ENCODE measurements at regions of chr3 and their contacts with region 1.

Region 1: GRCh38 chr3:122251428-122251827 is 68.0 kb downstream of the CASR start:
- DNase-seq: no peak
- ATAC-seq: no peak
- H3K4me3 ChIP-seq: no peak overlapping the region
- H3K4me1 ChIP-seq: no peaks in the 10 kb centered on the region
- CTCF ChIP-seq: no peak

Region 2: DNA sequence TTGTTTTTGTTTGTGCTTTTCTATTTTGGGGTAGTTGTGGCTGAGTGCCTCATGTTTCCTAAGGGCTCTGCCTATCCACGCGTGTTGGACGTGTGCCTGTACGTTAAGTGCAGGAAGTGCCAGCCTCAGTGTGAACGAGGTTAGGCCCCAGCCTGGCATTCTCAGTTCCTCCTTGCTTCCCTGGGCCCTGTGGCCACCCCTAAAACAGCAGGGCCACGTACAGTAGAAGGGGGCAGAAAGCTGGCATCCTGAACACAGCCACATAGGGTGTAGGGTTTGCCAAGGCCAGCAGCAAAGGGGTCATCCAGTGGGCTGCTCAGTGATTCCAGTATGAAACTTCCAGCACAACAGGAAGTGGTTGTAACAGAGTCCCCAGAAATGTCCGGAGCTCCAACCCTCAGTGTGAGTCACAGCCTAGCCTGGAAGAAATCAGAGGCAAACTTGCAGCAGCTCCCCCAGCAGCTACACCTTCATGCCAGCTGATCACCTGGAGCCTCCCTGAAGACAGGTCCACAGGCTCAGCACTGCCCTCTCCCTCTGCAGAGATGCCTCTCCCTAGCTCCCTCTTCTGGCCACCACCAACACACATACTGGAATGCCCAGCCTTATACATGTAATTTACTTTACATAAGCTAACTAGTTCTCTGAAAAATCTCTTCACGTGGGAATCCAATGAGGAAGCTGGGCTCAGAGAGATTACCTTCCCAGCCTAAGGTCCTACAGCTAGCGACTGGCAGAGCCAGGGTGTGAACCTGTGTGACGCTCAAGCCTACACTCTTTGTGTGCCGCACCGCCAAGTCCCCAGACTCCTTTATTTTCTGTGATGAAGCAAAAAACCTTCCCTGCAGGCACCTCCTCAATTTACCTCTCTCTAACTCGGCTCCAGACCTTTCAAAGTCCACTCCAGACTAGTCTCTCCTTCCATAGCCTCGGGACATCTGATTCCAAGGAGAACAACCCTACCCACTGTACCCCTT is 256.0 kb before region 1 on chr3:
- intact Hi-C with region 1: no loop called
- DNase-seq: peak; percentile 61 to 84 (median 63)
- ATAC-seq: peak; percentile 89
- H3K4me3 ChIP-seq: no peak overlapping the region
- H3K4me1 ChIP-seq: no peaks in the 10 kb centered on the region
- CTCF ChIP-seq: peak; percentile 36

Region 3: DNA sequence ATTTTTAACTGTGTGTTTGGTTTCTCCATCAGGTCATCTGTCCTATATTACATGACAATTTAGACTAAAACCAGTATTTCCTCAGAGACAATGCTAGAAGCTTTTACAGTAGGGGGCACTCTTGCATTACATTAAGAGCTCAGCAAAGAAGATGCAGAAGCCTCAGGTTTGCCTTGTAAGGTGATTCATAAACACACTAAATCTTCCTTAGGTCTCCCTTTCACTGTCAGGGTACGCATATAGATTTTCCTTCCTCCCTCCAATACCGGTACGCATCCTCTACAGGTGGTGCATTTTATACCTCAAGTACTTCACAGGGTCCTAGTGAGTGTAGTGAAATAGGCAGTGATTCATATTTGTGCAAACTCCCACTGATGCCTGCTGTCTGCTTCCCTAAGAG is 149.8 kb before region 1 on chr3:
- intact Hi-C with region 1: loop called in 1 of 2 experiments (anchors 5 kb)
- DNase-seq: peak in 1 of 3 donors; percentile 64
- ATAC-seq: peak; percentile 70
- H3K4me3 ChIP-seq: no peak overlapping the region
- H3K4me1 ChIP-seq: no peaks in the 10 kb centered on the region
- CTCF ChIP-seq: no peak